OCI-LY7 (cell line): ENCODE measurements at regions of chr16 and their contacts with region 1.

Region 1: DNA sequence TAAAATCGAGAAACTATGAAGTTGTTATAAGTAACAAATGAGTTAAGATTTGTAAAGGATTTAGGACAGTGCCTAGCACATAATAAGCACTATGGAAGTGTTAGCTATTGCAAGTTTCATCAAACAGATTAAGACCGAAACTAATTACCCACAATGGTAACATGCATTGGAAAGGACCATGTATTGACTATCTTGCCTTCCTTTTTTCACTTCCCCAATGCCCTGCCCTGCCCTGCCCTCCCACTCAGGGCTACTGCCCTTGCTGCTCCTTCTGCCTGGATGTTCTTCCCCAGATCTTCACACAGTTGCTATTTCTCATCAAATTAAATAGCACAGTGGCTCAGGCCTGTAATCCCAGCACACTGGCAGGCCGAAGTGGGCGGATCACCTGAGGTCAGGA is 202.1 kb upstream of the PSMD7 start:
- DNase-seq: no peak
- H3K4me3 ChIP-seq: no peak overlapping the region
- H3K27ac ChIP-seq: no peak overlapping the region
- H3K4me1 ChIP-seq: no peaks in the 10 kb centered on the region
- CTCF ChIP-seq: no peak

Region 2: GRCh38 chr16:74153773-74154172 is 59.3 kb after region 1 on chr16:
- CTCF ChIA-PET with region 1: no interaction called
- POLR2A ChIA-PET with region 1: no interaction called
- intact Hi-C with region 1: loop called (anchors 10 kb)
- DNase-seq: no peak
- H3K4me3 ChIP-seq: no peak overlapping the region
- H3K27ac ChIP-seq: no peak overlapping the region
- H3K4me1 ChIP-seq: no peaks in the 10 kb centered on the region
- CTCF ChIP-seq: no peak

Region 3: DNA sequence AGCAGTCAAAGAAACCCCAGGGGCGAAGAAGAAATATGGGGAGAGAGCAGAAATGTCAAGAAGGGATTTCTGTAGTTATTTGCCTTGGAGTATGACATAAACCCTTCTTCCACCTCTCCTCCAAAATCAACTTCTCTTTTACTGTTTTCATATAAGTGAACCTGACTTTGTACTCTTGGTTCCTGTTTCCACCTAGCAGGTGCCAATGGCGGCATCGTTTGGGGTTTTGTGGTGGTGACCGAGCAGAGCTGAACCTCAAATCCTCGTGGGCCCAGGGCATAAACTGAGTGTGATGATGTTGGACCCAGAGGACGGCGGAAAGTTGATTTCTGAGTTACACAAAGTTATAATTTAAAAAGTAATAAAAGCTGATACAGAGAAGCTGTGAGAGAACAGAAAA is 162.5 kb after region 1 on chr16:
- CTCF ChIA-PET with region 1: no interaction called
- POLR2A ChIA-PET with region 1: no interaction called
- intact Hi-C with region 1: no loop called
- DNase-seq: peak; percentile 10
- H3K4me3 ChIP-seq: no peak overlapping the region
- H3K27ac ChIP-seq: no peak overlapping the region
- H3K4me1 ChIP-seq: no peaks in the 10 kb centered on the region
- CTCF ChIP-seq: no peak

Region 4: DNA sequence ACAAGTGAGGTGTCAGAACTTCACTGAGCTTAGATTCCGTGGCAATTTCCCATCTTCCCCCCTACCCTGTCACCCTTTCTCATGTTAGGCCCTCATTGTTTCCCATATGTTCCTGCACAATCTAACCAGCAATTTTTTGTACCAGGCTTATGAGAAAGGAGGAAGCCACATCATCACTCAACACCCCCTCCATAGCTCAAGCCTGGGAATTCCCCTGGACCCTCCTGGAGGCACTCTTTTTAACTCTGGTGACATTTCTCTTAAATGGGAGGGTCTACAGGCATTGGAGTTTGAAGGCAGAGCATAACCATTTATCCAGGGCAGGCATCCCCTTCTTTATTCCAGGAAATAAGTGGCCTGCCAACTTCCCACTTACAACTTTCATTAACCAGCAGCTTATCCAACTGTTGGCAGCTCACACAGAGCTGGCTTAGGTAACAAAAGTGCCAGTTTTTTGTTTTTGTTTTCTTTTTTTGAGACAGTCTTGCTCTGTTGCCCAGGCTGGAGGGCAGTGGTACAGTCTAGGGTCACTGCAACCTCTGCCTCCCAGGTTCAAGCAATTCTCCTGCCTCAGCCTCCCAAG is 522.8 kb after region 1 on chr16:
- CTCF ChIA-PET with region 1: no interaction called
- POLR2A ChIA-PET with region 1: no interaction called
- intact Hi-C with region 1: no loop called
- DNase-seq: no peak
- H3K4me3 ChIP-seq: no peak overlapping the region
- H3K27ac ChIP-seq: no peak overlapping the region
- H3K4me1 ChIP-seq: no peaks in the 10 kb centered on the region
- CTCF ChIP-seq: no peak